Dorsolateral prefrontal cortex (tissue), 120 donors: ENCODE measurements at regions of chr2 and their contacts with region 1.

Region 1: DNA sequence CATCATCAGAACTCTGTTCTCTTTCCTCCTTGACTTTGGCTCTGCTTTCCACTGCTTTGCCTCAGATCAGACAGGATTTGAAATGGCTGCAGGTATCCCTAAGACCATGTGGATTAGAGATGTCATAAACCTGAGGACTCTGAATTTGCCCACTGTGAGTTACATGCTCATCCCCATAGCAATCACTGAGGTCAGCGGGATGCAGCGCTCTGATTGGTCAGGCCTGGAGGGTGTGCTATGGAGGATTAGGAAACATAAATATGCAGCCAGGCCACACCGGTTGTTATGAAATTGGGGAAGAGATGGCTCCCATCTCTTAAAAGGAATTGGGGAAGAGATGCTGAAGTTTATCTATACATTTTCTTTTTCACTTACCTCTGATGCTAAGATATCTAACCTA is 73.7 kb upstream of the DNAJC10 start:
- DNase-seq: peak; percentile 25 to 80 (median 55)
- H3K4me3 ChIP-seq: no peak overlapping the region
- H3K27ac ChIP-seq: no peak overlapping the region
- H3K27me3 ChIP-seq: no peaks in the 10 kb centered on the region
- CTCF ChIP-seq: no peak

Region 2: DNA sequence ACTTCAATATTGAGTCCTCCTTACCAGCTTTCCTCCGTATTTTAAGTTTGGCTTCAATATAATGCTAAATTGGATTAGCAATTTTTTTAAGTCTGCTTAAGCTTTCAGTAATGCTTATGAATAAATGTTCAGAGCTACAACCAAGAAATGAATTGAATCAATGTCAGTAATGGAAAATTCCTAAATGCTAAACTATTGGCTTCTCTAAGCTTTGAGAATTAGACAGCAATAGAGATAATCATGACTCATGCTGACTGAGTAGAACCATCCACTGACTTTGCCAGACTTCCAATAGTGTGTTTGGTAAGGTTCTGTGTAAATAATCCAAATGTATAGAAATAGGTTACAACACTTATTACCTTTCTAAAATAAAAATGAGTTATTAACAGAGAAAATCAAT is 206.6 kb before region 1 on chr2:
- intact Hi-C with region 1: no loop called
- DNase-seq: no peak
- H3K4me3 ChIP-seq: no peak overlapping the region
- H3K27ac ChIP-seq: no peak overlapping the region
- H3K27me3 ChIP-seq: no peaks in the 10 kb centered on the region
- CTCF ChIP-seq: no peak

Region 3: GRCh38 chr2:182522405-182522896 is 119.9 kb before region 1 on chr2:
- intact Hi-C with region 1: loop called in 1 of 2 experiments (anchors 10 kb)
- DNase-seq: peak in 2 of 10 donors; percentile 32 to 57
- H3K4me3 ChIP-seq: peak overlapping the region; percentile 2 to 72 (median 54)
- H3K27ac ChIP-seq: peak overlapping the region in 57 of 59 donors; percentile 19 to 88 (median 79)
- H3K27me3 ChIP-seq: no peaks in the 10 kb centered on the region
- CTCF ChIP-seq: no peak

Region 4: GRCh38 chr2:182553483-182553882 is 88.8 kb before region 1 on chr2:
- intact Hi-C with region 1: loop called in 1 of 2 experiments (anchors 10 kb)
- DNase-seq: no peak
- H3K4me3 ChIP-seq: no peak overlapping the region
- H3K27ac ChIP-seq: peak overlapping the region in 56 of 59 donors; percentile 52 to 99 (median 94)
- H3K27me3 ChIP-seq: no peaks in the 10 kb centered on the region
- CTCF ChIP-seq: no peak

Region 5: GRCh38 chr2:182672471-182673165 is 30.3 kb after region 1 on chr2:
- intact Hi-C with region 1: no loop called
- DNase-seq: no peak
- H3K4me3 ChIP-seq: no peak overlapping the region
- H3K27ac ChIP-seq: no peak overlapping the region
- H3K27me3 ChIP-seq: no peaks in the 10 kb centered on the region
- CTCF ChIP-seq: no peak